K562 (cell line): ENCODE measurements at regions of chr6 and their contacts with region 1.

Region 1: GRCh38 chr6:106339334-106340029 is 13.9 kb upstream of the ATG5 start:
- DNase-seq: peak; percentile 58 to 82 (median 67)
- ATAC-seq: peak; percentile 98
- H3K4me3 ChIP-seq: no peak overlapping the region
- H3K27ac ChIP-seq: no peak overlapping the region
- H3K4me1 ChIP-seq: no peaks in the 10 kb centered on the region; a peak in 1 of 5 replicates
- H3K27me3 ChIP-seq: peaks cover 0 to 5% of the 10 kb centered on the region in 2 experiments; a peak in 2 of 5 replicates
- CTCF ChIP-seq: peak; percentile 73 to 84 (median 81)
- EP300 ChIP-seq: no peak
- POLR2A ChIP-seq: no peak
- RAD21 ChIP-seq: peak; percentile 35 to 71; a peak in 3 of 4 replicates

Region 2: GRCh38 chr6:106568530-106568929 is 229.0 kb after region 1 on chr6:
- CTCF ChIA-PET with region 1: interaction called, 5 read pairs
- POLR2A ChIA-PET with region 1: no interaction called
- in situ Hi-C with region 1: loop called (anchors 5 kb)
- intact Hi-C with region 1: loop called (anchors 2 kb)
- DNase-seq: no peak
- ATAC-seq: no peak
- H3K4me3 ChIP-seq: no peak overlapping the region
- H3K27ac ChIP-seq: no peak overlapping the region
- H3K4me1 ChIP-seq: no peaks in the 10 kb centered on the region
- H3K27me3 ChIP-seq: no peaks in the 10 kb centered on the region
- CTCF ChIP-seq: no peak
- EP300 ChIP-seq: no peak
- POLR2A ChIP-seq: no peak
- RAD21 ChIP-seq: no peak

Region 3: DNA sequence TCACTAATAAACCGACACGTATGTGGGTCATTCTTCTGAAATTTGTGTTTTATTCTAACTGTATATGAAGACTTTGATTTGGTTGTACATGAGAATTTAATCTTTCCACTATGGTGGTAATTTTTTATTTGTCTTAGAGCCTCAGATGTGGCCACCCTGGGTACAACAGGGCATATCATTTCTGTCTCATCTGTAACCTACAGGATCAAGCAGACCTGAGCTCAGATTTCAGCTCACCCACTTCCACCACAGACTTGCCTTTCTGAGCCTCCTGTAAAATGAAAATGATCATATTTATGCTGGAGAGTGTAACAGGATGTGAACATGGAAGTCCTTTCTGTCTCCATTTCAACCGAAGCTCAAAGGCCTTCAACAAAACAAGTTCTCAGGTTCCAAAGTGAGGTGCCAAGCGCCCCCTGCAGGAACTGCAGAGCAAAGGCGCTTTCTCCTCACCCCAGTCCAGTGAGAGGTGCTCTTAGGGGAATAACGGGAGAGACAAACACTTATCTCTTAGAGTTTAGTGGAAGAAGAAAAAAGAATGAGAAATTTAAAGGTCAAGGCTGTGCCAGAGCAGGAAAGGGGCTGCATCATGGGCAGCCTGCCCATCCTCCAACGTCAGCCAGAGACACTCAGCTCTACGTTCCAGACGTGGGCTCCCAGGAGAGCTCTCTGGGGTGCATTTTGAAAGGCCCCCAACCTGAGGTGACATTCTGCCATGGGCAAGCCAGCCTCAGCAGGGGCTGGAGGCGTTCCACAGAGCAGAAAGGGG is 658.1 kb after region 1 on chr6:
- CTCF ChIA-PET with region 1: no interaction called
- POLR2A ChIA-PET with region 1: no interaction called
- in situ Hi-C with region 1: loop called (anchors 10 kb)
- intact Hi-C with region 1: loop called (anchors 5 kb)
- DNase-seq: peak; percentile 66 to 77 (median 74)
- ATAC-seq: peak; percentile 96
- H3K4me3 ChIP-seq: no peak overlapping the region
- H3K27ac ChIP-seq: no peak overlapping the region
- H3K4me1 ChIP-seq: peaks cover 3 to 4% of the 10 kb centered on the region in 2 experiments; a peak in 2 of 5 replicates
- H3K27me3 ChIP-seq: no peaks in the 10 kb centered on the region; a peak in 1 of 5 replicates
- CTCF ChIP-seq: peak; percentile 87 to 95 (median 92)
- EP300 ChIP-seq: no peak
- POLR2A ChIP-seq: no peak
- RAD21 ChIP-seq: peak; percentile 72 to 90